Activated T-helper 1 cell treated with anti-CD3 and anti-CD28 coated beads, Interleukin-12 subunit alpha, Interleukin-12 subunit beta, Interleukin-2, Interleukin-4 antibody, amounts not matched to agents 30 ng/mL and 10 ng/mL and 1 ng/mL, durations not matched to agents 14 hours and 24 hours and 36 hours (primary cell): ENCODE measurements at regions of chr13 and their contacts with region 1.

Region 1: GRCh38 chr13:22126433-22127021 is 455.7 kb downstream of the FGF9 start:
- DNase-seq: no peak
- H3K4me3 Mint-ChIP-seq: peak overlapping the region; percentile 26
- H3K27ac Mint-ChIP-seq: peak overlapping the region; percentile 60
- H3K4me1 Mint-ChIP-seq: peaks cover 36% of the 10 kb centered on the region
- H3K27me3 Mint-ChIP-seq: peaks cover 2% of the 10 kb centered on the region

Region 2: GRCh38 chr13:22017226-22017625 is 109.3 kb before region 1 on chr13:
- intact Hi-C with region 1: loop called (anchors 5 kb)
- DNase-seq: no peak
- H3K4me3 Mint-ChIP-seq: no peak overlapping the region
- H3K27ac Mint-ChIP-seq: no peak overlapping the region
- H3K4me1 Mint-ChIP-seq: peaks cover 11% of the 10 kb centered on the region
- H3K27me3 Mint-ChIP-seq: no peaks in the 10 kb centered on the region

Region 3: DNA sequence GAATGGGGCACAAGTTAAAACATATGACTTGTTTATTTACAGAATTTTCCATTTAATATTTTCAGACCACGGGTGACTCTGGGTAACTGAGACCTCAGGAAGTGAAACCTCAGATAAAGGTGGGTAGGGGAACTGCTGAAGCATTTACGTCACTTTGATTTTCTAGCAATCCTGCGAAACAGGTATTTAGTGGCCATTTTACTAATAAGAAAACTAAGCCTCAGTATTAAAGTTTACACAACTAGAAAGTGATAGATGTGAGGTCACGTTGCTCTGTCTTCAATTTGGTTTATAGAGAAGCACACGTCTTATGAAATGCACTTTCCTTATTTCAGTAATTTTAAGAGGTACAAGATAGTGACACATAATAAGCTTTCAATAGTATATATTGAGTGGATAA is 52.8 kb before region 1 on chr13:
- intact Hi-C with region 1: loop called (anchors 1 kb)
- DNase-seq: no peak
- H3K4me3 Mint-ChIP-seq: no peak overlapping the region
- H3K27ac Mint-ChIP-seq: peak overlapping the region; percentile 79
- H3K4me1 Mint-ChIP-seq: peaks cover 54% of the 10 kb centered on the region
- H3K27me3 Mint-ChIP-seq: no peaks in the 10 kb centered on the region

Region 4: DNA sequence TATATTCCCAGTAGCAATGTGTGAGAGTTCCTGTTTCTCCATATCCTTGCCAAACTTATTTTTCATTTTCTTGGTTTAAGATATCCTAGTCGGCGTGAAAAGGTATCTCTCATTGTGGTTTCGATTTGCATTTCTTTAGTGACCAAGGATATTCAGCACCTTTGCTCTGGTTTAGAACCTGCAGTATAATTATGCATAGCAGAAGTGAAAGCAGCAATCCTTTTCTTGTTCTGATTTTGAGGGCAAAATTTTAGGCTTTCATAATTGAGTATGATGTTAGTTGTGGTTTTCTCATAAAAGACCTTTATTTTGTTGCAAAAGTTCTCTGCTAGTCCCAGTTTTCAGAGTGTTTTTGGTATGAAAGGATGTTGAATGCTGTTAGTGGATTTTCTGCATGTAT is 35.3 kb after region 1 on chr13:
- intact Hi-C with region 1: loop called (anchors 1 kb)
- DNase-seq: no peak
- H3K4me3 Mint-ChIP-seq: no peak overlapping the region
- H3K27ac Mint-ChIP-seq: no peak overlapping the region
- H3K4me1 Mint-ChIP-seq: peaks cover 19% of the 10 kb centered on the region
- H3K27me3 Mint-ChIP-seq: peaks cover 1% of the 10 kb centered on the region